Lower leg skin (tissue), 4 donors: ENCODE measurements at regions of chr20 and their contacts with region 1.

Region 1: GRCh38 chr20:8722276-8722928 is 346.5 kb upstream of the PLCB4 start:
- DNase-seq: no peak
- H3K4me3 ChIP-seq: no peak overlapping the region
- CTCF ChIP-seq: no peak
- POLR2A ChIP-seq: no peak

Region 2: GRCh38 chr20:8049310-8049709 is 673.1 kb before region 1 on chr20:
- intact Hi-C with region 1: loop called (anchors 5 kb)
- DNase-seq: no peak
- H3K4me3 ChIP-seq: no peak overlapping the region
- CTCF ChIP-seq: no peak
- POLR2A ChIP-seq: no peak

Region 3: GRCh38 chr20:8131598-8132483 is 590.6 kb before region 1 on chr20 and contains the start of gene PLCB1:
- intact Hi-C with region 1: loop called (anchors 10 kb)
- DNase-seq: peak; percentile 71 to 97
- H3K4me3 ChIP-seq: peak within 1 kb of the TSS; percentile 51
- CTCF ChIP-seq: peak in 1 of 3 donors; percentile 26
- POLR2A ChIP-seq: no peak
- total RNA-seq, gene PLCB1: 4.1 to 16.2 (median 9.1) TPM

Region 4: GRCh38 chr20:8443464-8444072 is 278.8 kb before region 1 on chr20:
- intact Hi-C with region 1: no loop called
- DNase-seq: no peak
- H3K4me3 ChIP-seq: no peak overlapping the region
- CTCF ChIP-seq: no peak
- POLR2A ChIP-seq: no peak

Region 5: DNA sequence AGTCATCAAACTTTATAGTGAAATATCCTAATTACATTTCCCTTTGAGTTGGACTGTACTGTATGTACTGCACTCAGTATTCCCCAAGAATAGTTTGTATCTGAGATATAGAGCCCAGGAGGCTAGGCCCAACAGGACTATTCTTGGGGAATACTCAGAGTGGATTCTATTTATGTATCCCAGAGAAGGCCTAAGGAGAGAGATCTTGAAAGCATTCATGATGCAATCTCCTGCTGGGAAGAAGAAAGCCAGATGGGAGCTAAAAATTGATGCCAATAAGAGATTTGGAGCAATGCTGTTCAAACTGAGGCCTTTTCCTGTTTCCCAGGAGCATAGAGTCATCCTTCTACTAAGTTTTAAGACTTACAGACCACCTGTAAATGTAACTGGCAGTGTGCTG is 105.6 kb before region 1 on chr20:
- intact Hi-C with region 1: no loop called
- DNase-seq: no peak
- H3K4me3 ChIP-seq: no peak overlapping the region
- CTCF ChIP-seq: no peak
- POLR2A ChIP-seq: no peak